Naive thymus-derived CD4-positive, alpha-beta T cell (primary cell): ENCODE measurements at regions of chr5 and their contacts with region 1.

Region 1: GRCh38 chr5:131263648-131264450 is at the start of gene CDC42SE2:
- DNase-seq: peak; percentile 81 to 95 (median 90)
- ATAC-seq: peak; percentile 94
- H3K4me3 ChIP-seq: peak within 1 kb of the TSS; percentile 87
- H3K4me3 Mint-ChIP-seq: peak within 1 kb of the TSS; percentile 80 to 97 (median 92)
- H3K27ac ChIP-seq: peak within 1 kb of the TSS; percentile 98
- H3K27ac Mint-ChIP-seq: peak within 1 kb of the TSS; percentile 88 to 98 (median 95)
- H3K4me1 ChIP-seq: peaks cover 36% of the 10 kb centered on the region in 2 donors
- H3K4me1 Mint-ChIP-seq: peaks cover 25 to 61% (median 47%) of the 10 kb centered on the region in 7 donors
- H3K27me3 ChIP-seq: no peaks in the 10 kb centered on the region
- H3K27me3 Mint-ChIP-seq: no peaks in the 10 kb centered on the region
- total RNA-seq, gene CDC42SE2: 143 to 265 (median 215) TPM

Region 2: DNA sequence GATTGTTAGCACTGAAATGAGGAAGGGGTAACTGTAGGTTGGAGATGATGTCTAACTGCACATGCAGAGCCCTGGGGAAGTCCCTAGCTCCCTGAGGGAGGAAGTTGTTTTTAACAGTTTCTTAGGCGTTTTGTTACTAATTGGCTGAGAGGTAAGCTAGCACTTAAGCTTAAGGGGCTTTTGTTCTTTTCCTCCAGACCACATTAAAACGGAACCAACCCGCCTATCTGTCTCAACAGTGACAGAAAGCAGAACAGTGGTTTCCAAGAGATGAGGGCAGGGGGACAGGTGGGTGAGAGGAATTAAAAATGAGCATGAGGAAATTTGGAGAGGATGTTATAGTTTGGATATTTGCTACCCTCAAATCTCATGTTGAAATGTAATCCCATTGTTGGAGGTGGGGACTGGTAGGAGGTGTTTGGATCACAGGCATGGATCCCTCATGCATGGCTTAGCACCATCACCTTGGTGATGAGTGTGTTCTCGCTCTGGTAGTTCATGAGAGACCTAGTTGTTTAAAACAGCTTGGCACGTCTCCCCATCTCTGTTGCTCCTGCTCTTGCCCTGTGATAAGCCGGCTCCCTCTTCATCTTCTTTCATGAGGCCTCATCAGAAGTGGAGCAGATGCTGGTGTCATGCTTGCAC is 54.2 kb before region 1 on chr5:
- CTCF ChIA-PET with region 1: interaction called, 5 read pairs
- POLR2A ChIA-PET with region 1: interaction called, 19 read pairs
- intact Hi-C with region 1: loop called (anchors 1 kb)
- DNase-seq: peak; percentile 11 to 91 (median 84)
- ATAC-seq: peak; percentile 98
- H3K4me3 ChIP-seq: peak overlapping the region; percentile 21
- H3K4me3 Mint-ChIP-seq: peak overlapping the region; percentile 72 to 90 (median 80)
- H3K27ac ChIP-seq: peak overlapping the region; percentile 77
- H3K27ac Mint-ChIP-seq: peak overlapping the region; percentile 91 to 98 (median 96)
- H3K4me1 ChIP-seq: peaks cover 18 to 37% of the 10 kb centered on the region in 2 donors
- H3K4me1 Mint-ChIP-seq: peaks cover 42 to 75% (median 61%) of the 10 kb centered on the region in 7 donors
- H3K27me3 ChIP-seq: no peaks in the 10 kb centered on the region
- H3K27me3 Mint-ChIP-seq: no peaks in the 10 kb centered on the region

Region 3: DNA sequence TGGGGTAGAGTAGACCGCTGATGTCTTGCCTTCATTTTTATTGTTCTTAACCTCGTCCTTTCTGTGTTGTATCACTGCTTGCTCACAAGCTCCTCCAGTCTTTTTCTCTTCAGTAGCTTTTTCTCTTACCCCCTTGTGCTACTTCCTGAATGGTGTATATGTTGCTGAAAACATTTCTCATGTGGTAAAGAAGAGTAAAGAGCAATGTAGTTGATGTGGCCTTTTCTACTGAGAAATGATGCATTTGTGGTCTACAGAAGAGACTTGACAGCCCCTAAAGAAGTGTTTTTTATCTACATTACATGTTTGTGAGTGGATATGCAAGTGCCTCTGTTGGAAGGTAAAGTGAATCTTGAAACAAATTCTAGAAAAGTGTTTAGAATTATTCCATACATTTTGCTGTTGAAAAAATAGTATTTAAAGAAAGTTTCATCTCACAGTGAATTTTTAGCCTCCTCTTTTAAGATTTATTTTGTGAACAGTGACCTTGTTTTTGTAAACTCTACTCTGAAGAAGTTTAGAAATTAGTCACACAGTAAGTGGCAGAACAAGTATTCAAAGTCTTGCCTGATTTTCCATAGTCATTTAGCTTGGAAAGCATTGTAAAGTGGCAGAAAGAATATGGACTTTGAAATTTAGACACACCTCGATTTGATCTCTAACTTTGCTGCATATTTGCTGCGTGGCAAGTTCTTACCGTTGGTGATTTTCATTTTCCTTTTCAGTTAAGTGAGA is 17.5 kb after region 1 on chr5:
- CTCF ChIA-PET with region 1: interaction called, 5 read pairs
- POLR2A ChIA-PET with region 1: interaction called, 176 read pairs
- intact Hi-C with region 1: loop called (anchors 1 kb)
- DNase-seq: peak in 7 of 9 donors; percentile 74 to 94 (median 89)
- ATAC-seq: peak; percentile 91
- H3K4me3 ChIP-seq: peak overlapping the region; percentile 50
- H3K4me3 Mint-ChIP-seq: peak overlapping the region; percentile 72 to 87 (median 80)
- H3K27ac ChIP-seq: peak overlapping the region; percentile 80
- H3K27ac Mint-ChIP-seq: peak overlapping the region; percentile 82 to 98 (median 94)
- H3K4me1 ChIP-seq: peaks cover 65 to 88% of the 10 kb centered on the region in 2 donors
- H3K4me1 Mint-ChIP-seq: peaks cover 42 to 90% (median 80%) of the 10 kb centered on the region in 7 donors
- H3K27me3 ChIP-seq: no peaks in the 10 kb centered on the region
- H3K27me3 Mint-ChIP-seq: peaks cover 0 to 3% (median 0%) of the 10 kb centered on the region in 5 donors

Region 4: GRCh38 chr5:131316026-131316425 is 52.2 kb after region 1 on chr5:
- CTCF ChIA-PET with region 1: no interaction called
- POLR2A ChIA-PET with region 1: interaction called, 3 read pairs
- intact Hi-C with region 1: loop called in 1 of 2 experiments (anchors 2 kb)
- DNase-seq: no peak
- ATAC-seq: peak; percentile 12
- H3K4me3 ChIP-seq: no peak overlapping the region
- H3K4me3 Mint-ChIP-seq: peak overlapping the region in 6 of 10 donors; percentile 3 to 52 (median 35)
- H3K27ac ChIP-seq: no peak overlapping the region
- H3K27ac Mint-ChIP-seq: peak overlapping the region in 6 of 9 donors; percentile 12 to 79 (median 24)
- H3K4me1 ChIP-seq: peaks cover 22 to 32% of the 10 kb centered on the region in 2 donors
- H3K4me1 Mint-ChIP-seq: peaks cover 51 to 93% (median 78%) of the 10 kb centered on the region in 7 donors
- H3K27me3 ChIP-seq: no peaks in the 10 kb centered on the region
- H3K27me3 Mint-ChIP-seq: no peaks in the 10 kb centered on the region

Region 5: DNA sequence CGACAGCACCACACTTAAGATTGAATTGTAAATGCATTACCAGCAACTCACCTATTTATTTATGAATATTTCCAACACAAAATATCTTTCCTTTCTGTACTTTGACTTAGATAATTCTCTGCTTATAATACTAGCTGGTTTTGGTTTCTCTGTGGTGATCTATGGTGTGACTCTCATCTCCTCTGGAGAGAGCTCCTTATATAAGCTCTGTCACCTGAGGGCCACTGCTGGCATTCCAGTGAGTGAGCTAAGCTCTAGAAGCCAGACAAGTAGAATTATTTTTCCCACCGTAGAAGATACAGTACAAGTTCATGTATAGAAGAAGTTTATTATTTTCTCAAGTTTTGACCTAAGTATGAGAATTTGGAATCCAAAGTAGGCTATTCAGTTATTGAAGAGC is 111.5 kb after region 1 on chr5:
- CTCF ChIA-PET with region 1: interaction called, 6 read pairs
- POLR2A ChIA-PET with region 1: interaction called, 48 read pairs
- intact Hi-C with region 1: no loop called
- DNase-seq: peak in 1 of 9 donors; percentile 60
- ATAC-seq: no peak
- H3K4me3 ChIP-seq: no peak overlapping the region
- H3K4me3 Mint-ChIP-seq: peak overlapping the region in 8 of 10 donors; percentile 15 to 80 (median 56)
- H3K27ac ChIP-seq: peak overlapping the region; percentile 97
- H3K27ac Mint-ChIP-seq: peak overlapping the region; percentile 86 to 99 (median 94)
- H3K4me1 ChIP-seq: peaks cover 80 to 91% of the 10 kb centered on the region in 2 donors
- H3K4me1 Mint-ChIP-seq: peaks cover 44 to 100% (median 91%) of the 10 kb centered on the region in 7 donors
- H3K27me3 ChIP-seq: no peaks in the 10 kb centered on the region
- H3K27me3 Mint-ChIP-seq: no peaks in the 10 kb centered on the region

Region 6: GRCh38 chr5:132334812-132335211 is 1071.0 kb after region 1 on chr5:
- CTCF ChIA-PET with region 1: no interaction called
- POLR2A ChIA-PET with region 1: no interaction called
- intact Hi-C with region 1: no loop called
- DNase-seq: peak in 1 of 9 donors; percentile 4
- ATAC-seq: peak; percentile 20
- H3K4me3 ChIP-seq: no peak overlapping the region
- H3K4me3 Mint-ChIP-seq: no peak overlapping the region
- H3K27ac ChIP-seq: no peak overlapping the region
- H3K27ac Mint-ChIP-seq: peak overlapping the region in 1 of 9 donors; percentile 16
- H3K4me1 ChIP-seq: no peaks in the 10 kb centered on the region
- H3K4me1 Mint-ChIP-seq: peaks cover 0 to 6% (median 0%) of the 10 kb centered on the region in 7 donors
- H3K27me3 ChIP-seq: no peaks in the 10 kb centered on the region
- H3K27me3 Mint-ChIP-seq: no peaks in the 10 kb centered on the region